ENCODE measurements at regions of chr3 and their contacts with region 1.

Region 1: GRCh38 chr3:118628704-118629341 is 405.8 kb downstream of the IGSF11 start:
- DNase-seq: peak; percentile 52
- H3K4me3 ChIP-seq: no peak overlapping the region
- H3K27ac ChIP-seq: no peak overlapping the region
- H3K4me1 ChIP-seq: no peaks in the 10 kb centered on the region
- H3K27me3 ChIP-seq: no peaks in the 10 kb centered on the region
- CTCF ChIP-seq: peak; percentile 95 to 96

Region 2: GRCh38 chr3:116770815-116771450 is 1857.9 kb before region 1 on chr3:
- CTCF ChIA-PET with region 1: no interaction called
- dilution Hi-C with region 1: no loop called
- in situ Hi-C with region 1: no loop called
- intact Hi-C with region 1: loop called (anchors 2 kb)
- DNase-seq: peak; percentile 55
- H3K4me3 ChIP-seq: no peak overlapping the region
- H3K27ac ChIP-seq: no peak overlapping the region
- H3K4me1 ChIP-seq: no peaks in the 10 kb centered on the region
- H3K27me3 ChIP-seq: no peaks in the 10 kb centered on the region
- CTCF ChIP-seq: peak; percentile 93 to 98

Region 3: GRCh38 chr3:117997201-117998049 is 631.4 kb before region 1 on chr3:
- CTCF ChIA-PET with region 1: no interaction called
- dilution Hi-C with region 1: no loop called
- in situ Hi-C with region 1: no loop called
- intact Hi-C with region 1: loop called (anchors 1 kb)
- DNase-seq: peak; percentile 50
- H3K4me3 ChIP-seq: peak overlapping the region; percentile 14 to 51 (median 43)
- H3K27ac ChIP-seq: no peak overlapping the region
- H3K4me1 ChIP-seq: peaks cover 10% of the 10 kb centered on the region
- H3K27me3 ChIP-seq: peaks cover 11% of the 10 kb centered on the region
- CTCF ChIP-seq: peak; percentile 91 to 97

Region 4: DNA sequence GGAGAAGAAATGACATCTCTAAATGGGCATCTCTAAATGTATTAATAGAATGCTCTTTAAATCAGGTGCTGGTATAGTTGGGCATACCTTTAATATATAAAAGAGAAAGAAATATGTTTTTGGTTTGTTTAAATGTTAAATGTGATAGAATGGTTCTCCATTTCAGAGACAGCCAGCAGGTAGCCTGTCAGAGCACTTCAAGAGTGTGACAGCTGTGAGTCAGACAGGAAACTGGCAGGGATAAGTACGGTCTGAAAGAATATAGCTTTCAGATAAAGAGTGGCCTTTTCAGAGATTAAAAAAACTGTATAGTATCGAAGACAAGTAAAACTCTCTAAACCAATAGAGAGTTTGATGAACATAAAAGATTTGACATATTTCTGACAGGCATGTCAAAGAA is 248.2 kb before region 1 on chr3:
- CTCF ChIA-PET with region 1: no interaction called
- dilution Hi-C with region 1: no loop called
- in situ Hi-C with region 1: no loop called
- intact Hi-C with region 1: loop called (anchors 10 kb)
- DNase-seq: no peak
- H3K4me3 ChIP-seq: no peak overlapping the region
- H3K27ac ChIP-seq: no peak overlapping the region
- H3K4me1 ChIP-seq: no peaks in the 10 kb centered on the region
- H3K27me3 ChIP-seq: no peaks in the 10 kb centered on the region
- CTCF ChIP-seq: no peak